ENCODE measurements at regions of chr10 and their contacts with region 1.

Region 1: GRCh38 chr10:68742397-68742796 is 21.4 kb downstream of the CCAR1 start:
- DNase-seq: peak; percentile 15
- H3K4me3 ChIP-seq: no peak overlapping the region
- H3K27ac ChIP-seq: no peak overlapping the region
- H3K4me1 ChIP-seq: no peaks in the 10 kb centered on the region
- H3K27me3 ChIP-seq: no peaks in the 10 kb centered on the region
- CTCF ChIP-seq: no peak

Region 2: GRCh38 chr10:68462536-68462935 is 279.9 kb before region 1 on chr10:
- CTCF ChIA-PET with region 1: no interaction called
- dilution Hi-C with region 1: loop called (anchors 10 kb)
- in situ Hi-C with region 1: no loop called
- intact Hi-C with region 1: no loop called
- DNase-seq: no peak
- H3K4me3 ChIP-seq: no peak overlapping the region
- H3K27ac ChIP-seq: no peak overlapping the region
- H3K4me1 ChIP-seq: no peaks in the 10 kb centered on the region
- H3K27me3 ChIP-seq: no peaks in the 10 kb centered on the region
- CTCF ChIP-seq: no peak

Region 3: DNA sequence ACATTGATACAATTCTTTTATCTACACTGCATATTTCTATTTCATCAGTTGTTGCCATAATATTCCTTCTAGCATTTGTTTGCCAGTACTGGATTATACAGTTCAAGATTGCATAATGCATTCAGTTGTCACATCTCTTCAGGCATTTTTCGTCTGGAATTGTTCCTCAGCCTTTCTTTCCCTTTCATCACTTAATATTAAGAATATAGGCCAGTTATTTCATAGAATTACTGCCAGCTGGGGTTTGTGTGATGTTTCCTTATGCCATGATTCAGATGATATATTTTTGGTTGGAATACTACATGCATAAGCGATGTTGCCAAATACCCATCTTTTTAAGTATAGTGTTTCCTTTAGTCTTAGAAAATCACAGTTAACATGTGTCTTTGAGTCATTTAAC is 267.0 kb after region 1 on chr10:
- CTCF ChIA-PET with region 1: no interaction called
- dilution Hi-C with region 1: no loop called
- in situ Hi-C with region 1: no loop called
- intact Hi-C with region 1: no loop called
- DNase-seq: no peak
- H3K4me3 ChIP-seq: no peak overlapping the region
- H3K27ac ChIP-seq: no peak overlapping the region
- H3K4me1 ChIP-seq: no peaks in the 10 kb centered on the region
- H3K27me3 ChIP-seq: no peaks in the 10 kb centered on the region
- CTCF ChIP-seq: no peak

Measured in mammary epithelial cell (primary cell).